ENCODE measurements at regions of chr1 and their contacts with region 1.

Region 1: DNA sequence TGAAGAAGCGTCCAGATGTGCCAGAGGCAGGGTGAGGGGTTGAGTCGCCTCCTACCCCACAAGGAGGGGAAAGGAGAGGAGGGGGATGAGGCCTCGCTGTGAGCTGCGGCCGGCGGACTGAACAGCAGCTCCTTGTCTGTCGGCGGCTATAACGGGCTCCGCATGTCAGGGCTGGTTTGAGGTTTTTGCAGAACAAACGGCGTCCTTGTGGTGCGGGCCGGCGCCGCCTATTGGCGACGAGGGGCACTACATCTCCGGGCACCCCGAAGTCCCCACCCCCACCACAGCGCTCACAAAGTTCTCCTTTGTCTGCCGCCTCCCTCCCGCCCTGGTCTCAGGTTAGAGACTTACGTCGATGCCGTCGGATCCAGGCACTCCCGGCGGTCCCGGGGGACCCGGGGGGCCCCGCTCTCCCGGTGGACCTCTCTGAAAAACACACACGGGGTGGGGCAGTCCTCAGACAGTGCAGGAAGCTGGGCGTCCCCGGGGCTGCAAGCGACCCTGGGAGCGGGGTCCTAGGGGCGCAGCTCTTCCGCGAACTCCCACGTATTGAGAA is 1.8 kb downstream of the COL9A2 start:
- DNase-seq: peak; percentile 94
- ATAC-seq: peak; percentile 61
- H3K4me3 ChIP-seq: peak overlapping the region; percentile 43 to 78 (median 66)
- H3K4me3 Mint-ChIP-seq: peak overlapping the region; percentile 92
- H3K27ac ChIP-seq: peak overlapping the region in 1 of 2 donors; percentile 40
- H3K27ac Mint-ChIP-seq: peak overlapping the region; percentile 76
- H3K4me1 ChIP-seq: peaks cover 41 to 59% of the 10 kb centered on the region in 2 donors
- H3K4me1 Mint-ChIP-seq: peaks cover 57% of the 10 kb centered on the region
- H3K27me3 ChIP-seq: peaks cover 0 to 3% (median 1%) of the 10 kb centered on the region in 4 experiments
- H3K27me3 Mint-ChIP-seq: peaks cover 5% of the 10 kb centered on the region
- CTCF ChIP-seq: peak; percentile 95

Region 2: DNA sequence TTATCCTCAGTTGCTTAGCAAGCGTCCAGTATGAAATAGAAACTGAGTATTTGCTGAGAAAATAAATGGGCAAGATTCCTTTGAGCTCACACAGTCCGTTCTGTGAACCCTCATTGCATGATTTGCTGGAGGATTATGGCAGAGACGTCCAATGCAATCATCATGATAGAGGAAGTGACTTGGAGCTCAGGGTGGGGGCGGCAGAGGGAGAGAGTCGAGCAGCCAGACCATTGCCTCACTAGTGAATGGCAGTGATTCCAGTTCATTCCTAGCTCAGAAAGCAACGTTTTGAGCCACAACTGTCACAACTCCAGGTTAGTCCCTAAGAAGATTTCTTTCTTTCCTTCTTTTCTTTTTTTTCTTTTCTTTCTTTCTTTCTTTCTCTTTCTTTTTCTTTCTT is 29.3 kb after region 1 on chr1:
- CTCF ChIA-PET with region 1: interaction called, 132 read pairs
- POLR2A ChIA-PET with region 1: interaction called, 4 read pairs
- intact Hi-C with region 1: no loop called
- DNase-seq: peak; percentile 68
- ATAC-seq: peak; percentile 89
- H3K4me3 ChIP-seq: peak overlapping the region in 4 of 5 experiments; percentile 27 to 62 (median 36)
- H3K4me3 Mint-ChIP-seq: peak overlapping the region; percentile 68
- H3K27ac ChIP-seq: peak overlapping the region; percentile 42 to 71
- H3K27ac Mint-ChIP-seq: peak overlapping the region; percentile 60
- H3K4me1 ChIP-seq: peaks cover 35 to 36% of the 10 kb centered on the region in 2 donors
- H3K4me1 Mint-ChIP-seq: peaks cover 54% of the 10 kb centered on the region
- H3K27me3 ChIP-seq: no peaks in the 10 kb centered on the region
- H3K27me3 Mint-ChIP-seq: no peaks in the 10 kb centered on the region
- CTCF ChIP-seq: no peak

Region 3: GRCh38 chr1:40385437-40386358 is 70.4 kb after region 1 on chr1:
- CTCF ChIA-PET with region 1: interaction called, 13 read pairs
- POLR2A ChIA-PET with region 1: interaction called, 3 read pairs
- intact Hi-C with region 1: no loop called
- DNase-seq: peak; percentile 94
- ATAC-seq: peak; percentile 73
- H3K4me3 ChIP-seq: peak overlapping the region; percentile 30 to 70 (median 31)
- H3K4me3 Mint-ChIP-seq: peak overlapping the region; percentile 87
- H3K27ac ChIP-seq: peak overlapping the region; percentile 99 to 100
- H3K27ac Mint-ChIP-seq: peak overlapping the region; percentile 97
- H3K4me1 ChIP-seq: peaks cover 94 to 98% of the 10 kb centered on the region in 2 donors
- H3K4me1 Mint-ChIP-seq: peaks cover 91% of the 10 kb centered on the region
- H3K27me3 ChIP-seq: no peaks in the 10 kb centered on the region
- H3K27me3 Mint-ChIP-seq: no peaks in the 10 kb centered on the region
- CTCF ChIP-seq: no peak